AG04450 (cell line): ENCODE measurements at regions of chr7 and their contacts with region 1.

Region 1: DNA sequence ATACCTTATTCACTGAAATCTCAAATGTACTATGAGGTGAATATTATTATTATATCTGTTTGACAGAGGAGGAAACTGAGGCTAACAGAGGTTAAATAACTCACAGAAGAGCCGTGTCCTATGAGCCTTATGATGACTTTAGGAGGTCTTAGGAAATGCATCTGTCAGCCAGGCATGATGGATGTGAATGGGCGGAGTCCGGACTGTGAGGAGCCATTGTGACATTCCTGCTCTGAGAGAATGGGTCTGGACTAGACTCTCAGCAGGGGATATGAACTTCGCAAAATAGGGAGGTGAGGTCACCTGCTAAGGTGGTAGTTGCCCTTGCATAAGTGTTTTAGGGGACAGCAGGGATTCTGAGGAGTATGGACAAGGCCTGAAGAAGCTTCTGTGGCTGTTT is 153.6 kb downstream of the TMEM178B start:
- DNase-seq: no peak
- H3K4me3 ChIP-seq: no peak overlapping the region
- H3K27ac ChIP-seq: no peak overlapping the region
- H3K27me3 ChIP-seq: no peaks in the 10 kb centered on the region
- CTCF ChIP-seq: no peak

Region 2: GRCh38 chr7:140384894-140385545 is 842.4 kb before region 1 on chr7:
- CTCF ChIA-PET with region 1: no interaction called
- POLR2A ChIA-PET with region 1: no interaction called
- DNase-seq: no peak
- H3K4me3 ChIP-seq: no peak overlapping the region
- H3K27ac ChIP-seq: no peak overlapping the region
- H3K27me3 ChIP-seq: no peaks in the 10 kb centered on the region
- CTCF ChIP-seq: no peak

Region 3: GRCh38 chr7:140924019-140924820 is 303.2 kb before region 1 on chr7:
- CTCF ChIA-PET with region 1: no interaction called
- POLR2A ChIA-PET with region 1: interaction called, 10 read pairs
- DNase-seq: peak; percentile 16
- H3K4me3 ChIP-seq: peak overlapping the region; percentile 87
- H3K27ac ChIP-seq: peak overlapping the region; percentile 89
- H3K27me3 ChIP-seq: no peaks in the 10 kb centered on the region
- CTCF ChIP-seq: peak; percentile 65

Region 4: GRCh38 chr7:141198184-141198958 is 29.1 kb before region 1 on chr7:
- CTCF ChIA-PET with region 1: no interaction called
- POLR2A ChIA-PET with region 1: no interaction called
- DNase-seq: no peak
- H3K4me3 ChIP-seq: no peak overlapping the region
- H3K27ac ChIP-seq: no peak overlapping the region
- H3K27me3 ChIP-seq: no peaks in the 10 kb centered on the region
- CTCF ChIP-seq: no peak

Region 5: DNA sequence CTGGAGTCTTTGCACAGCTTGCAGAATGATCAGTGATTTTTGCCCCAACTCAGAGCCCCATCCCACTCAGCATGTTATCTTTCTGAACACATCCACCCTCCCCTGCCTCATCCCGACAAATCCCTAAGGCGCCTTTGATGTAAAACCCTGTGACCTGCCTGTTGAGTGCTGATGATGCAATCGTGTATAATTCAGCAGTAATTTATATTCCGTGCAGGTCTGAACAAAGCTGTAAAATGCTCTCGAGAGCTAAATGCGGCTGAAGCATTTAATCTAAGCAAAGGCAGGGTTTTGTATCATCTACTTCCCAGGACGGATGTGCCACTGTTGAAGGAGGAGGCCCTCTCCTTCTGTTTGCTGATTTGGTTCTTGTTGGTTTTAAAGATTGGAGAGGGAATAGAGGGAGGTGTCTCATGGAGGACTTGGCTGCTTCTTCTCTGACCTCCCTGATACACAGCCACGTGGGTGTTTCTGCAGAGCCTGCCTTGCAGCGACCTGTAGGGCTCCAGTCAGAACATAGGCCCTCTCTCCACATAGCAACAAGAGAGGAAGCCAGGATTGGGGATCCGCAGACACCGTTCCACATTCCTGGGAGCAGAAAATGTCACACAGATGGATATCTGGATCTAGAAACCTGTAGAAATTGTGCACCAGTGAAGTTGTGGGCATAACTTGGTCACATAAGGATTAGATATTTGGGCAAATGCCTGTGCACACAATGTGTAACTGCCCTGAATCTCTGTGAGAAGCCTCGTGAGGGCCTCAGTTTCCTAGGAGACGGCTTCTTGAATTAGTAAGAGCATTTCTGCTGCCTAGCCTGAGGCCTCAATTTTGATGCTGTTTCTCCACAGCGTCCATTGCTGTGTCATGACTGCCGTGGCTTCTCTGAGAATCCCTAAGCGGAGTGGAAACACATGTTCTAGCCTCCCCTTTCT is 233.6 kb after region 1 on chr7:
- CTCF ChIA-PET with region 1: no interaction called
- POLR2A ChIA-PET with region 1: no interaction called
- DNase-seq: no peak
- H3K4me3 ChIP-seq: no peak overlapping the region
- H3K27ac ChIP-seq: no peak overlapping the region
- H3K27me3 ChIP-seq: no peaks in the 10 kb centered on the region
- CTCF ChIP-seq: no peak